AG04449 (cell line): ENCODE measurements at regions of chr18 and their contacts with region 1.

Region 1: GRCh38 chr18:12287684-12288402 is 20.2 kb upstream of the TUBB6 start:
- DNase-seq: peak; percentile 87
- H3K4me3 ChIP-seq: peak overlapping the region; percentile 60
- CTCF ChIP-seq: peak; percentile 12

Region 2: GRCh38 chr18:12302391-12303147 is 14.7 kb after region 1 on chr18:
- CTCF ChIA-PET with region 1: interaction called, 11 read pairs
- POLR2A ChIA-PET with region 1: interaction called, 69 read pairs
- DNase-seq: no peak
- H3K4me3 ChIP-seq: no peak overlapping the region
- CTCF ChIP-seq: no peak